Dorsolateral prefrontal cortex (tissue), 120 donors: ENCODE measurements at regions of chr3 and their contacts with region 1.

Region 1: DNA sequence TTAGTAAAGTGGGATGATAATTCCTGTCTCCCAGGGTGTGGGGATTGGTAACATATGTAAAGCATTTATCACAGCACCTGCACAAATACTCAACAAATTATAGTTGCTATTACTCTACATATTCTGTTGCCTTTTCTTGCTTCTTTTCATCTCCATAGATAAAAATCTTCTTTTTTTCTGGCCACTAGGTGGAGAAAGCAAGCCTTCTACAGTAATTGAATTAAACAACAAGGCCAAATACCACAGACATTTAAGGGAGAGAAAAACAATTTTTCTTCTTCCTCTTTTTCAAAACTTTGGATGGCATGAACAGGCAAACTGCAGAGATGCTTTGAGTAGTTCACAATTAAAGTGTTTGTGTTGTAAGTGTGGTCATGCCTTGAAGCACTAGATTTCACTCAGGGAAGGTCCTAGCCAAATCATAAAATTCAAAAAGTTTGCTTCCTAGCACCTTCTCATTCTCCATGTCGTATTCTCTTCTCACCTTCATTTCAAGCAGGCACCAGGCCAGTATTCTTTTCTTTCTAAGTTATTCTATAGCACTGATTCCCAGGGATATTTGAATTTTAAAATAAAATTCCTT is 493.4 kb upstream of the TGFBR2 start:
- DNase-seq: no peak
- H3K4me3 ChIP-seq: no peak overlapping the region
- H3K27ac ChIP-seq: no peak overlapping the region
- H3K27me3 ChIP-seq: peaks cover 0 to 10% (median 0%) of the 10 kb centered on the region in 45 donors
- CTCF ChIP-seq: peak; percentile 59 to 90 (median 78)

Region 2: GRCh38 chr3:29789686-29790085 is 323.3 kb before region 1 on chr3:
- intact Hi-C with region 1: no loop called
- DNase-seq: no peak
- H3K4me3 ChIP-seq: no peak overlapping the region
- H3K27ac ChIP-seq: no peak overlapping the region
- H3K27me3 ChIP-seq: no peaks in the 10 kb centered on the region
- CTCF ChIP-seq: no peak

Region 3: GRCh38 chr3:30180310-30181177 is 67.6 kb after region 1 on chr3:
- intact Hi-C with region 1: loop called in 1 of 2 experiments (anchors 5 kb)
- DNase-seq: no peak
- H3K4me3 ChIP-seq: no peak overlapping the region
- H3K27ac ChIP-seq: no peak overlapping the region
- H3K27me3 ChIP-seq: peaks cover 0 to 6% (median 0%) of the 10 kb centered on the region in 45 donors
- CTCF ChIP-seq: no peak